GM23248 (cell line): ENCODE measurements at regions of chr2 and their contacts with region 1.

Region 1: GRCh38 chr2:153519257-153519875 is 40.8 kb upstream of the RPRM start:
- DNase-seq: peak; percentile 63
- H3K4me3 ChIP-seq: no peak overlapping the region
- H3K27ac ChIP-seq: no peak overlapping the region
- H3K4me1 ChIP-seq: no peaks in the 10 kb centered on the region
- H3K27me3 ChIP-seq: no peaks in the 10 kb centered on the region

Region 2: GRCh38 chr2:152740743-152741328 is 778.5 kb before region 1 on chr2:
- in situ Hi-C with region 1: loop called (anchors 25 kb)
- DNase-seq: peak; percentile 77
- H3K4me3 ChIP-seq: no peak overlapping the region
- H3K27ac ChIP-seq: no peak overlapping the region
- H3K4me1 ChIP-seq: no peaks in the 10 kb centered on the region
- H3K27me3 ChIP-seq: no peaks in the 10 kb centered on the region